H1 (cell line): ENCODE measurements at regions of chr1 and their contacts with region 1.

Region 1: GRCh38 chr1:11059990-11060830 is at the start of gene SRM:
- DNase-seq: peak in 1 of 2 experiments; percentile 90
- H3K4me3 ChIP-seq: peak within 1 kb of the TSS; percentile 79 to 98 (median 86)
- H3K27ac ChIP-seq: peak within 1 kb of the TSS; percentile 83
- H3K4me1 ChIP-seq: peaks cover 0 to 12% (median 3%) of the 10 kb centered on the region in 4 experiments; a peak in 4 of 7 replicates
- H3K27me3 ChIP-seq: no peaks in the 10 kb centered on the region
- CTCF ChIP-seq: peak in 2 of 3 experiments; percentile 35 to 43; a peak in 3 of 4 replicates
- EP300 ChIP-seq: no peak
- POLR2A ChIP-seq: peak in 1 of 2 experiments; percentile 18; a peak in 1 of 3 replicates
- RAD21 ChIP-seq: peak in 1 of 2 experiments; percentile 25; a peak in 1 of 4 replicates
- total RNA-seq, gene SRM: 206 and 208 TPM in 2 replicates

Region 2: DNA sequence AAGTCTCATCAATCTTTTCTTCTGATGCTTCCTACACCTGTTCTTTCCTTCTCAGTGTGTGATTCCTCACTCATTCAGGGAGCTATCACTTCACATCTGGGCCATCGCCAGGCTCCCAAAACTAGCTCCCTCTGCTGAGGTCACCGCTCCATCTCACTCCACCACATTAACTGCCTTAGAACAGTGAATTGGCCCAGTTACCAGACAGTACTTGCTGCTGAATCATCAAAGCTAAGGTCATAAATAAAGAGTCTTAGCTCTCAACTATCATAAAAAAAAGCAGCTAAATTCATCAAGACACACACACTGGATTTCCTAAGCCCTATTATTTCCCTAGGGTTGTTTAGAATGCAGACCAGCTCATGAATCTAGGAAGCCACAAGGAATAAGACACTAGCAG is 18.4 kb after region 1 on chr1:
- CTCF ChIA-PET with region 1: interaction called, 46 read pairs
- POLR2A ChIA-PET with region 1: interaction called, 5 read pairs
- DNase-seq: no peak
- H3K4me3 ChIP-seq: no peak overlapping the region
- H3K27ac ChIP-seq: no peak overlapping the region
- H3K4me1 ChIP-seq: no peaks in the 10 kb centered on the region
- H3K27me3 ChIP-seq: no peaks in the 10 kb centered on the region
- CTCF ChIP-seq: no peak
- EP300 ChIP-seq: no peak
- POLR2A ChIP-seq: no peak
- RAD21 ChIP-seq: no peak